WTC11 (cell line): ENCODE measurements at regions of chr19 and their contacts with region 1.

Region 1: DNA sequence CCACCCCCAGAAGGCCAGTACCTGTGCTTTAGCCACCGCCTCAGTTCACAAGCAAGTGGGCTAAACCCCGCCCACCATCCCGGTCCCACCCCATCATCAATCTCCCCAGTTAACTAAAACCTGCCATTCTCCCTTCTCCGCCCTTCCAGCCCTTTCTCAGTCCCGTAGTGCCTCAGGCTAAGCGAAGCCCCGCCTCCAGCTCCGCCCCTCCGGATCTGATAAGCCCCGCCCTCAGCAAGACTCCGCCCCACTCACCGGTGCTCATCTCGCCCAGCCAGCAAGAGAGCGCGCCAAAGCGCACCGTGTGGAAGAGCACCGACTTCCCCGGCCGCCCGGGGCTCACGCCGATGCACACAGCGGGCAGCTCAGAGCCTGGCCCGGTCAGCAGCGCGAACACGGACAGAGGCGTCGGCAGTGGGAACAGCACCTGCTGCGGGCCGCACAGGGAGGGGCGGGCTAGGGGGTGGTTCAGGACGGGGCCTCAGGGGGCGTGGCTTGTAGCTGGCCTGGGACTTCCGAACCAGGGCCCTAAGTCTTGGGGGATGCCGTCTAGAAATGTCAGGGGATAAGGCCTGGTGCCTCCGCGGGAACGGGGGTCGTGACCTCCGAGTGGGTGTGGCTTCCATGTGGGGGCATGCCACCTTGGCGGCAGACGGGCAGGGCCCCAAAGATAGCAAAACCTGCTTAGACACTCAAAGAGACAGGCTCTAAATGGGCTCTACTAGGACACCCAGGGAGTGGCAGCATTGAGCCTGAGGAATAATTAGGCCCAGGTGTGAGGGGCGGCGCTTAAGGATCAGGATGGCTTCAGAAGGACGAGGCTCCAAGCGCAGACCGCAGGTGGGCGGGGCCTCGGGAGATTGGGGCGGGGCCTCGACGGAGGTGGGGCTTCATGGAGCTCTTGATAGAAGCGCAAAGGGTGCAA is 21.4 kb downstream of the MAP4K1 start:
- DNase-seq: peak; percentile 98
- ATAC-seq: peak; percentile 90
- H3K4me3 Mint-ChIP-seq: peak overlapping the region; percentile 91
- H3K27ac Mint-ChIP-seq: peak overlapping the region; percentile 98
- H3K4me1 Mint-ChIP-seq: peaks cover 8% of the 10 kb centered on the region
- H3K27me3 Mint-ChIP-seq: peaks cover 7% of the 10 kb centered on the region; the same call in 1 of the 2 replicates
- CTCF ChIP-seq: no peak

Region 2: DNA sequence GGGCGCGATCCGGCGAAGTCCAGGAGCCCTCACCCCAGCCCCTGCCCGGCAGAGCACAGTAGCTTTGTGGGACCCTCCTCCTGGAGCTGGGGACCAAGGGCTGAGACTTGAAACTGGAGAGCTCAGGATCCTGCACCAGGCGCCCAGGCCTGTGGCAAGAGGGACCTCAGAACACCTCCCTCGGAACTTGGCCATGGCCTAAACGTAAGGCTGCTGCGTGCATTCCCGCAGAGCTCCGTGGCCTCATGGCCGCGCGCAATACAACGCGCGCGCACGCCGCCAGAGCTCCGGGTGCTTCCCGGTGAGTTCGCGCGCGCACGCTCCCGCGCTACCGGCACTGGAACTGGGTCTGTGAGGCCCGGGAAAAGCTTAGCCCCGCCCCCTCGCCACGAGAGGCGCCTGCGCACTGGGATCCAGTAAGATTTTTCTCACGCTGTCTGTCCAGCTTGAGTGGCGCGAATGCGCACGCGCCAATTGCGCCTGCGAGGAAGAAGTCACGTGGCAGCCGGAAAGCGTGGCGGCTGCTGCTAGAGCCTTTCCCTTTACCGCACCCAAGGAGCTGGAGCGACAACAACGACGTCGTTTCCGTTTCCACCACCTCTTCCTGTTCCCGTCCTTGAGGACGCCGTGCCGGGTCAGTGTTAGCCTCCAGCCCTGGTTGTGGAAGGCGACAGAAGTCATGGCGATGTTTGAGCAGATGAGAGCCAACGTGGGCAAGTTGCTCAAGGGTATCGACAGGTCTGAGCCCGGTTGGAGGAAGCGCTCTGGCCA is 22.5 kb after region 1 on chr19 and contains the start of gene EIF3K:
- CTCF ChIA-PET with region 1: interaction called, 24 read pairs
- POLR2A ChIA-PET with region 1: interaction called, 28 read pairs
- DNase-seq: peak; percentile 99
- ATAC-seq: peak; percentile 85
- H3K4me3 Mint-ChIP-seq: peak within 1 kb of the TSS; percentile 100
- H3K27ac Mint-ChIP-seq: peak within 1 kb of the TSS; percentile 99
- H3K4me1 Mint-ChIP-seq: peaks cover 45% of the 10 kb centered on the region
- H3K27me3 Mint-ChIP-seq: no peaks in the 10 kb centered on the region; the same call in 1 of the 2 replicates
- CTCF ChIP-seq: no peak
- total RNA-seq, gene EIF3K: 389 to 416 TPM (median 410 TPM) in 3 replicates